Heart left ventricle (tissue), 16 donors: ENCODE measurements at regions of chr2 and their contacts with region 1.

Region 1: GRCh38 chr2:61470965-61471904 is at the start of gene USP34:
- DNase-seq: peak; percentile 96 to 97 (median 97)
- ATAC-seq: peak; percentile 96 to 98 (median 97)
- H3K4me3 ChIP-seq: peak within 1 kb of the TSS; percentile 68 to 99 (median 90)
- H3K27ac ChIP-seq: peak within 1 kb of the TSS; percentile 95 to 100 (median 98)
- H3K4me1 ChIP-seq: peaks cover 2 to 41% (median 26%) of the 10 kb centered on the region in 12 donors
- H3K27me3 ChIP-seq: no peaks in the 10 kb centered on the region
- CTCF ChIP-seq: no peak
- POLR2A ChIP-seq: peak in 1 of 2 donors; percentile 85
- total RNA-seq, gene USP34: 48.5 to 82.8 (median 61.9) TPM

Region 2: DNA sequence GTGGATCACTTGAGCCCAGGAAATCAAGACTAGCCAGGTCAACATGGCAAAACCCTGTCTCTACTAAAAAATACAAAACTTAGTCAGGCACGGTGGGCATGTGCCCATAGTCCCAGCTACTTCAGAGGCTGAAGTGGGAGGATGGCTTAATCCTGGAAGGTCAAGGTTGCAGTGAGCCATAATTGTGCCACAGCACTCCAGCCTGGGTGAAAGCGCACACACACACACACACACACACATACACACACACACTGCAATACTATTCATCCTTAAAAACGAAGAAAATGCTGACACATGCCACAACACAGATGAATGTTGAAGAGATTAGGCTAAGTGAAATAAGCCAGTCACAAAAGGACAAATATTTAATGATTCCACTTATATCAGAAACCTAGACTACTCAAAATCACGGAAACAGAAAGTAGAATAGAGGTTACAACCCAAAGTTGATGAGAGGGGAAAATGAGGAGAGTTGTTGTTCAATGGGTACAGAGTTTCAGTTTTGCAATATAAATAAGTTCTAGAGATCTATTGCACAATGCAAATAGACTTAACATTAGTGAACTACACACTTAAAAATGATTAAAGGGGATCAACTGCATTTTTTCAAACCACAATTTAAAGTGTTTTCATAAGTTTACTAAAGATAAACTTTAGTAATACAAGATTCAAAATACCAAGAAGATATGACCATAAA is 114.8 kb before region 1 on chr2:
- intact Hi-C with region 1: loop called in 2 of 10 experiments (anchors 10 kb)
- DNase-seq: no peak
- ATAC-seq: peak in 2 of 4 donors; percentile 46 to 51
- H3K4me3 ChIP-seq: no peak overlapping the region
- H3K27ac ChIP-seq: peak overlapping the region in 3 of 12 donors; percentile 10 to 61 (median 28)
- H3K4me1 ChIP-seq: peaks cover 0 to 39% (median 17%) of the 10 kb centered on the region in 12 donors
- H3K27me3 ChIP-seq: no peaks in the 10 kb centered on the region
- CTCF ChIP-seq: no peak
- POLR2A ChIP-seq: no peak